CD4-positive, alpha-beta memory T cell (primary cell): ENCODE measurements at regions of chr6 and their contacts with region 1.

Region 1: GRCh38 chr6:44475779-44476434 is 88.4 kb downstream of the CDC5L start:
- DNase-seq: peak; percentile 47 to 66 (median 63)
- H3K4me3 ChIP-seq: no peak overlapping the region
- H3K4me3 Mint-ChIP-seq: no peak overlapping the region
- H3K27ac ChIP-seq: no peak overlapping the region
- H3K27ac Mint-ChIP-seq: no peak overlapping the region
- H3K4me1 ChIP-seq: peaks cover 6% of the 10 kb centered on the region
- H3K4me1 Mint-ChIP-seq: peaks cover 0 to 5% (median 2%) of the 10 kb centered on the region in 4 donors
- H3K27me3 ChIP-seq: no peaks in the 10 kb centered on the region
- H3K27me3 Mint-ChIP-seq: peaks cover 2 to 3% of the 10 kb centered on the region in 2 donors

Region 2: DNA sequence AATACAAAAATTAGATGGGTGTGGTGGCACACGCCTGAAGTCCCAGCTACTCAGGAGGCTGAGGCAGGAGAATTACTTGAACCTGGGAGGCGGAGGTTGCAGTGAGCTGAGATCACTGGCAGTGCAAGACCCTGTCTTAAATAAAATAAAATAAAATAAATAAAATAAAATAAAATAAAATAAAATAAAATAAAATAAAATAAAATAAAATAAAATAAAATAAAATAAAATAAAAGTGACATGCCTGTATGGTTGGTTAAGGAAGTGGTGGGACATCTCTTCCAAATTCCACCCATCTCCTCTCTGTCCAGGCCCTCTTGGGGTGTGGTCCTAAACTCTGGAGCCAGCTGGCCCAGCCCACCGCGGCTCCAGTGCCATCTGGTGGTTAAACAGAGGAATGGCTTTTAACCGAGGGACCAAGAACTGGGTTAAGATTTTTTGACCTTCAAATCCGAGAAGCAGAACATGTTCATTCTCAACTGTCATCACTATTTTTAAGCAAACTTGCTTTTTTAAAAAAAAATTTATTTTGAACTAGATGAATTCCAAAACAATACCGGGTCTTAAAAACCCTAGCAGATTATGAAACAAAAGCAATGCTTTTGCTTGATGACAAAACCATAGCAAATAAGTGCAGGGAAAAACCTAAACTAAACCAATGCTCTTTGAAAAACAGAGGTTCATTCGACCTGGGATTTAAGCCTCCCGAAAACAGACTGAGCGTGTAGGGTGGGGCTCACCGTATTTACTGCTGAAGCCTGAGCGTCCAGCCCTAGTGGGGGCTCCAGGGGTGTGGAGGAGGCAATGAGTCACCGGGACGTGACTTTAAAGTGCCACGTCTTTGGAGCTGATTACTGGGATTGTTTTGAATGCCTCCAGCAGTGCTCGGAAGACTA is 19.6 kb before region 1 on chr6:
- CTCF ChIA-PET with region 1: interaction called, 10 read pairs
- POLR2A ChIA-PET with region 1: no interaction called
- intact Hi-C with region 1: no loop called
- DNase-seq: peak in 4 of 5 donors; percentile 16 to 35 (median 26)
- H3K4me3 ChIP-seq: no peak overlapping the region
- H3K4me3 Mint-ChIP-seq: no peak overlapping the region
- H3K27ac ChIP-seq: no peak overlapping the region
- H3K27ac Mint-ChIP-seq: peak overlapping the region in 2 of 7 donors; percentile 29 to 34
- H3K4me1 ChIP-seq: no peaks in the 10 kb centered on the region
- H3K4me1 Mint-ChIP-seq: peaks cover 0 to 5% (median 0%) of the 10 kb centered on the region in 4 donors
- H3K27me3 ChIP-seq: no peaks in the 10 kb centered on the region
- H3K27me3 Mint-ChIP-seq: peaks cover 0 to 8% of the 10 kb centered on the region in 2 donors

Region 3: DNA sequence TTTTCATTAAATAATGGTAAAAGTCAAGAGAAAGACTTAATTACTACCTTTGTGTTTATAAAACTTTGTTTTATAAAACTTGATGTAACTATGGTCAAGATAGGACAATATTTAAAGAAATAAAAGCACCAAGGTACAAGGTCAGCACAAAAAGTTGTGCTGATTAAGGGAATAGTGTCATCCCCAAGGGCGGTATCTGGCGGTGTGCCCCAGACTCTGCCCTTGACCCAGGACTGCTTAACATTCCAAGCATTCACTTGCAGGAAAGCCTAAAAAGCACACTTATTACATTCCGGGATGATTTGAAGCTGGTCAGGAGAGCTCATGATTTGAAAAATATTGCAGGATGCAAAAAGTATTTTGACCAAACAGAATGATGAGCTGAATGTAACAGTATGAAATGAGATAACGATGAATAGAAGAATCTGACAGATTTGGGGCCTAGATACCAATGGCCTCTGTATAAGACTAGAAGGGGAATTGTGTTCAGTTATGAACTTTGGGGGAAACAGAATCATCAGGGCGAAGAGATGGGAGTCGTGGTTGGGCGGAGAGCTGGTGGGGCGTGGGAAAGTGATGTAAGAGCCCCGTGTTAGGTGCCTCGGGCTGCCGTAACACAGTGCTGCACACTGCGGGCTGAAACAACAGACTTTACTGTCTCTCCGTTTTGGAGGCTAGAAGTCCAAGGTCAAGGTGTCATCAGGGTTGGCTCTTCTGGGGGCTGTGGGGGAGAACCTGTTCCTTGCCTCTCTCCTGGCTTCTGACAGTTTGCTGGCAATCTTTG is 11.2 kb before region 1 on chr6:
- CTCF ChIA-PET with region 1: interaction called, 18 read pairs
- POLR2A ChIA-PET with region 1: no interaction called
- intact Hi-C with region 1: no loop called
- DNase-seq: no peak
- H3K4me3 ChIP-seq: no peak overlapping the region
- H3K4me3 Mint-ChIP-seq: no peak overlapping the region
- H3K27ac ChIP-seq: no peak overlapping the region
- H3K27ac Mint-ChIP-seq: no peak overlapping the region
- H3K4me1 ChIP-seq: no peaks in the 10 kb centered on the region
- H3K4me1 Mint-ChIP-seq: no peaks in the 10 kb centered on the region
- H3K27me3 ChIP-seq: no peaks in the 10 kb centered on the region
- H3K27me3 Mint-ChIP-seq: peaks cover 2 to 9% of the 10 kb centered on the region in 2 donors

Region 4: DNA sequence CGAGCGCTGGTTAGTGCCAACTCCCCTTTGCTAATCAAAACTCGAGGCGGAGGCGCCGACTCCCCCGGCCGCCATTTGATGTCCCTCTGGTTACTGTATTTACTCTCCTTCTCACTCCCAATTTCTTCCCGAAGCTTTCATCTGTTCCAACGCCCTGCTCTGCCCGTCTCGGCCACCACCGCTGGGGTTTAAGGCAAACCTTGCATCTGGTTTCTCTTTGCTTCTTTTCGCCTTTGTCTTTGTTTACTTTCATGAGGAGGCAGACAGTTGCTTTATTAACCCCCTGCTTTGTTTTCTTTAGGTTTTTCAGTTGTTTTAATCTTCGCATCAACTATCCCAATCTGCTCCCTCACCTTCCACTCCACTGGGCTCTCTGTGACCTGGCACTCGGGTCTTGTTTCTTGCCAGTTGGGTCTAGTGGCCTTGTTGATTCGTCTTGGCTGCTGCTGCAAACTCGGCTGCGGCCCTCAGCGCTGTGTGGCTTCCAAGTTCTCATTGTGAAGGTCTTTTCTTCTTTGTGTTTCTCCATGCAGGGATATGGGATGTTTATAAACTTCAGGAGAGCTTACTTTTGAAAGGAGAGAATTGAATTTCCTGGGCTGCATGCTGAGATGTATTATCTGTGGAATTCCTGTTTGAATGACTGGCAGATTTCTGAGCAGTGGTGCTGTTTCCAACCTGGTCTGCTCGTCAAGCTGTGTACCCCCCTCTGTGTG is 66.7 kb after region 1 on chr6:
- CTCF ChIA-PET with region 1: no interaction called
- POLR2A ChIA-PET with region 1: no interaction called
- intact Hi-C with region 1: no loop called
- DNase-seq: no peak
- H3K4me3 ChIP-seq: no peak overlapping the region
- H3K4me3 Mint-ChIP-seq: no peak overlapping the region
- H3K27ac ChIP-seq: no peak overlapping the region
- H3K27ac Mint-ChIP-seq: no peak overlapping the region
- H3K4me1 ChIP-seq: no peaks in the 10 kb centered on the region
- H3K4me1 Mint-ChIP-seq: no peaks in the 10 kb centered on the region
- H3K27me3 ChIP-seq: no peaks in the 10 kb centered on the region
- H3K27me3 Mint-ChIP-seq: peaks cover 0 to 6% of the 10 kb centered on the region in 2 donors